CD4-positive, alpha-beta T cell (primary cell): ENCODE measurements at regions of chr1 and their contacts with region 1.

Region 1: GRCh38 chr1:203069030-203069747 is 16.6 kb downstream of the MYOG start:
- DNase-seq: peak in 1 of 14 experiments; percentile 7
- ATAC-seq: no peak
- H3K4me3 ChIP-seq: no peak overlapping the region
- H3K4me3 Mint-ChIP-seq: no peak overlapping the region
- H3K27ac ChIP-seq: no peak overlapping the region
- H3K27ac Mint-ChIP-seq: no peak overlapping the region
- H3K4me1 ChIP-seq: no peaks in the 10 kb centered on the region
- H3K4me1 Mint-ChIP-seq: no peaks in the 10 kb centered on the region
- H3K27me3 ChIP-seq: peaks cover 3 to 8% of the 10 kb centered on the region in 2 experiments
- H3K27me3 Mint-ChIP-seq: peaks cover 13% of the 10 kb centered on the region
- CTCF ChIP-seq: no peak

Region 2: DNA sequence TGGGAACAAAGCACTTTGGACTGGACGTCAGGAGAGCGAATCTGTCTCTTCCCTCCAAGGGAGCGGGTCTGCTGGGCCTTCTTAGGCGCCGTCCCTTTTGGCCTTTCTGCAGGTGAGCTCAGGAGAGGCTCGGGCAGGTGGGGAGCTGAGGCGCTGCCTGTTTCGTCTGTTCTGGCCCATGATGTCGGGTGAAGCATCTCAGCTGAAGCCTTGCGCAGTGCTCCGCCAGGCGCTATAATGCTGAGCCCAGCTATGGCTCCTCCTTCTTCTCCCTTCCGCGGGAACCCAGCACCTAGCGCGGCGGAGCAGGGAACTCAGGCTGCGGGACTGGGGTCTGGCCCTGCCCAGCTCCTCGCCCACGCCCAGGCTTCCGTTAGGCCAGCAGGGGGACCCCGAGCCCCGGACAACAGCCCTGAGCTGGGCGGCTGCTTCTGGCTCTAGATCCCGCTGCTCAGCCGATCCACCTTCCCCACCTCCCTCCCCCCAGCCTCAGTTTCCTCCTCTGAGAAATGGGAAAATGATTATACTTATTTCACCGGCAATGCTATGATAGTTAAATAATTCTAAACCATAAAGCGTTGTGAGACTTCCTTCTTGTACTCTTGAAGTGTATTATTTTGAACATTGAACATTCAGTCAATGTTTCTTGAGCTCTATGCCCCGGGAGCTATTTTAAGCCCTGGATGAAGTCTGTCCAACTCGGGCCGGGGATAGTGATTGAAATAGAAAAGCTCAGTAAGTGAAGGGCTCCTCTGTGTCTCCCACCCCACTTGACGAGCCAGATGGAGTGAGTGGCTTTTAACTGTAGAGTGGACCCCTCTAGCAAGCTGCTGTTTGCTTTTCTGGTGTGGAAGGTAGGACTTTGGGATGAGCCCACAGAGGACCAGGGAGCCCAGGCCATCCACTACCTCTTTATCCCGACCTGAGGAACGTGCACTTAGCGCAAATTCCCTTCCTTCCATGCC is 48.7 kb after region 1 on chr1:
- CTCF ChIA-PET with region 1: no interaction called
- POLR2A ChIA-PET with region 1: no interaction called
- intact Hi-C with region 1: no loop called
- DNase-seq: peak in 5 of 14 experiments; percentile 8 to 46 (median 19)
- ATAC-seq: no peak
- H3K4me3 ChIP-seq: no peak overlapping the region
- H3K4me3 Mint-ChIP-seq: no peak overlapping the region
- H3K27ac ChIP-seq: no peak overlapping the region
- H3K27ac Mint-ChIP-seq: no peak overlapping the region
- H3K4me1 ChIP-seq: no peaks in the 10 kb centered on the region
- H3K4me1 Mint-ChIP-seq: peaks cover 5% of the 10 kb centered on the region
- H3K27me3 ChIP-seq: peaks cover 25 to 44% of the 10 kb centered on the region in 2 experiments
- H3K27me3 Mint-ChIP-seq: peaks cover 53% of the 10 kb centered on the region
- CTCF ChIP-seq: no peak

Region 3: DNA sequence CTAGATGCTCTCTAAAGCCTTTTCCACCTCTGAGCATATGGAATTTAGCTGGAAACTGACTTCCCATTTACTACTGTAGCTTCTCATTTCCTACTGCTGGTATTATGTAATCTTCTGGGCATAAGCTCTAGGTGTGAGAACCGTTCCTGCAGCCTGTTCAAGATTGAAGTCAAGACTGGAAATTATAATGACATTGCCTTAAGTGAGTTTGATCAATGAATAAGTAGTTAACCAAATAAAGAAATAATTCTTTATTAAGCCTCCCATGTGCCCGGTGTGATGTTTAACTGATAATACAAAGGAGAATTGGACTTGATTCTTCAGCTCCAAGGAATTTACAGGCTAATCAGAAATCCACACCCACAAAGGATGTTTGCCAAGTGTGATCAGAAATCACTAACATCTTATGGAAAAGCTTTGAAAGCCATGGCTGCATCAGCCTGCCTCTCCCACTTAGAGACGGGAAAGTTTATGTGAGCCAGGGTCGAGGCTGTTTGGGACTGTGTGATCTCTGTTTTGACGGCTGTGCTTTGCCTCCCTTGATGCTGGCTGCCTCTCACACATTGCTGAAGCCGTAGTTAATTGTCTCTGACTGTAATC is 370.0 kb after region 1 on chr1:
- CTCF ChIA-PET with region 1: no interaction called
- POLR2A ChIA-PET with region 1: no interaction called
- intact Hi-C with region 1: loop called in 1 of 2 experiments (anchors 10 kb)
- DNase-seq: no peak
- ATAC-seq: no peak
- H3K4me3 ChIP-seq: no peak overlapping the region
- H3K4me3 Mint-ChIP-seq: no peak overlapping the region
- H3K27ac ChIP-seq: no peak overlapping the region
- H3K27ac Mint-ChIP-seq: no peak overlapping the region
- H3K4me1 ChIP-seq: no peaks in the 10 kb centered on the region
- H3K4me1 Mint-ChIP-seq: no peaks in the 10 kb centered on the region
- H3K27me3 ChIP-seq: peaks cover 0 to 10% of the 10 kb centered on the region in 2 experiments
- H3K27me3 Mint-ChIP-seq: peaks cover 19% of the 10 kb centered on the region
- CTCF ChIP-seq: no peak